ENCODE measurements at regions of chr11 and their contacts with region 1.

Region 1: GRCh38 chr11:416757-417621 is 2.2 kb upstream of the SIGIRR start:
- DNase-seq: peak; percentile 67
- H3K4me3 Mint-ChIP-seq: peak overlapping the region; percentile 99
- H3K27ac Mint-ChIP-seq: peak overlapping the region; percentile 91
- H3K4me1 Mint-ChIP-seq: peaks cover 30% of the 10 kb centered on the region
- H3K27me3 Mint-ChIP-seq: no peaks in the 10 kb centered on the region

Region 2: DNA sequence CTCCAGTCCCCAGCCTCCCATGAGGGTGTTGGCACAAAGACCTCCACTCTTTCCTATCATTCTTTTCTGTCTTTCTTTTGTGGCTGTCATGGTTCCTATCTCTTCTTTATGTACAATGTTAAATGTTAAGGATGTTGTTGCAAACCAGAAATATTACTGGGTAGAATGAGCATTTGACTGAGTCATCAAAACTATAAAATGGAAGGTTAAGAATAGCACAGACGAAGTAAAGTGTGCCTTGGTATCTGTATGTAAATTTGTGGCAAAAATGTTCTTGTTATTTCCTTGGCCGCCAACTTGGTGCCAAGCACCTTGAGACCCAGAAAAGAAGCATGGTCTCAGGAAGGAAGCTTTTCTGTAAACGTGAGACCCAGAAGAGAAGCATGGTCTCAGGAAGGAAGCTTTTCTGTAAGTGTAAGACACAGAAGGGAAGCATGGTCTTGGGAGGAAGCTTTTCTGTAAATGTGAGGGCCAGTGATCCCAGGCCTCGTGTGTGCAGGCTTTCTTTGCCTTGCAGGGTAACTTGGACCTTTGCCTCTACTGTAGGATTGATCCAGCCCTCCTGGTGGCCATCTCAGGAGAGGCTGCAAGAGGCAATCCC is 29.7 kb before region 1 on chr11:
- CTCF ChIA-PET with region 1: no interaction called
- POLR2A ChIA-PET with region 1: no interaction called
- DNase-seq: no peak
- H3K4me3 Mint-ChIP-seq: no peak overlapping the region
- H3K27ac Mint-ChIP-seq: no peak overlapping the region
- H3K4me1 Mint-ChIP-seq: no peaks in the 10 kb centered on the region
- H3K27me3 Mint-ChIP-seq: peaks cover 13% of the 10 kb centered on the region

Region 3: DNA sequence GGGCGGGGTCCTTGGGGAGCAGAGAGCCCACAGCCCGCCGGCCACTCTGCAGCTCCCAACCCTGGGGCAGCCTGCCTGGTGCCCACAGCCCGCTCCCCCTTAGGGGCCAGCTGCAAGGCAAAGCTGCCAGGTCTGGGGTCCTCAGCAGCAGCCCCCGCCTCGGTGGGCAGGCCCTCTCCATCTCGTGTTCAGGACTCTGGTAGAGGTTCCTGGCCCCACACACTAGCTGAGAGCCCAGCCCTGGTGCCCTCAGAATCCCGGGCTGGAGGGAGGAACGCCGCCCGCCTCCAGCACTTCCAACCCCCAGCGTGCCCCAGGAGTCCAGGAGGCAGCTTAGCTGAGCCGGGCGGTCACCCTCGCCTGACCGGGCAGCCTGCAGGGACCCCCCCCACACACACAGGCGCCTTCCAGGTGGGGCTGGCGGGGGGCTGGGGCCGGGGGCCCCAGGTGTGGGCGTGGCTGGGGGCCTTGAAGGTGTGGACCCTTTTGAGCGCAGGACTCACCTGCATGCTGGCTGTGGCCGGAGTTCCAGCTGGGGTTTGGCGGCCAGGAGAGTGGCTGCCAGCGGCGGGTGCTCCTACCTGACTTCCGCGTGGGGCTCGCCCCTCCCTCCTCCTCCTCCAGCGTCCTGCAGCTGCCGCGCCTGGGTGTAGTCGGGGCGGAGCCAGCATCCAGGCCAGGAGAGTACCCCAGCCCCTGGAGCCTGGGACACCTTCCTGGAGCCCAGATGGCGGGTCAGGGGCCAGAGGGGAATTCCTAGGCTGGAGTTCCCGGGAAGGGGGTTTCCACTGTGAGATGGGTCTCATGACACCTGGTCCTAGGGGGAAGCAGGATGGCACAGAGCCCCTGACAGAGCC is 24.7 kb after region 1 on chr11 and contains the start of gene ANO9:
- CTCF ChIA-PET with region 1: interaction called, 3 read pairs
- POLR2A ChIA-PET with region 1: interaction called, 30 read pairs
- DNase-seq: peak; percentile 74
- H3K4me3 Mint-ChIP-seq: peak within 1 kb of the TSS; percentile 75
- H3K27ac Mint-ChIP-seq: no peak within 1 kb of the TSS
- H3K4me1 Mint-ChIP-seq: peaks cover 35% of the 10 kb centered on the region
- H3K27me3 Mint-ChIP-seq: peaks cover 9% of the 10 kb centered on the region
- total RNA-seq, gene ANO9: 69.2 to 73.5 TPM

Region 4: DNA sequence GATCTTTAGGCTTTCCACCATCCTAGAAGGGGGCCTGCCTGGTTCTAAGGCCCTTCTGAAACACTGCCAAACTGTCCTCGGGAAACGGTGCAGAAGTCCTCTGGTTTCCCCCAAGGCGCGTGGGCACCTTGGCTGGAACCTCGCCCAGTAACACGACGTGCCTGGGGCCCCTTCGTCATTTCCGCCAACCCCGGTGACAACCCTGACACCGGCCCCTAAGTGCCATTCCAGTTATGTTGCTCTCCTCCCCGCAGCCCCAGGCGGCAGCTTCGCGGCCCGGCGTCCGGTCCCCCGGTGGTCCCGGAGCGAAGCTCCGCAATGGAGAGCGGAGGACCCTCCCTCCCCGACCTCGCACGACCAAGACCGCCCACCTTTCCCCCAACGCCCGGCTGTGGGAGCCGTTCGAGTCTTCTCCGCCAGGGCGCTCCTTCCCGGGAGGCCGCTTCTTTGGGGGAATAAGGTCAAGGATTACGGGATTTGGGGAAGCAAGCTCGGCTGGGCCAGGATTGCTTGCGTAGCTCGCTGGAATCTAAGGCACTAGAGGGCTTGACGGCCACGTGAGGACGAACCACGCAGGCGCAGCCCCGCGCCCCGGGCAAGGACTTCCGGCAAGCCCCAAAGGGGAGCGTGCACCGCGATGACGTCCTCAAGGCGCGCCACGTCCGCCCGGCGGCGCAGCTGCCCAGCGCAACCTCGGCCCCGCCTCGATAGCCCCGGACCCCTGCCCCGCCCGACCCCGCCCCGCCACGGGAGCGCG is 89.4 kb after region 1 on chr11:
- CTCF ChIA-PET with region 1: no interaction called
- POLR2A ChIA-PET with region 1: interaction called, 36 read pairs
- DNase-seq: peak; percentile 97
- H3K4me3 Mint-ChIP-seq: peak overlapping the region; percentile 95
- H3K27ac Mint-ChIP-seq: peak overlapping the region; percentile 99
- H3K4me1 Mint-ChIP-seq: peaks cover 40% of the 10 kb centered on the region
- H3K27me3 Mint-ChIP-seq: no peaks in the 10 kb centered on the region

Measured in activated CD4-positive, alpha-beta memory T cell treated with anti-CD3 and anti-CD28 coated beads, Interleukin-2, amount 10 ng/mL, durations not matched to agents 7 days and 5 days (primary cell).